ENCODE measurements at regions of chr18 and their contacts with region 1.

Region 1: DNA sequence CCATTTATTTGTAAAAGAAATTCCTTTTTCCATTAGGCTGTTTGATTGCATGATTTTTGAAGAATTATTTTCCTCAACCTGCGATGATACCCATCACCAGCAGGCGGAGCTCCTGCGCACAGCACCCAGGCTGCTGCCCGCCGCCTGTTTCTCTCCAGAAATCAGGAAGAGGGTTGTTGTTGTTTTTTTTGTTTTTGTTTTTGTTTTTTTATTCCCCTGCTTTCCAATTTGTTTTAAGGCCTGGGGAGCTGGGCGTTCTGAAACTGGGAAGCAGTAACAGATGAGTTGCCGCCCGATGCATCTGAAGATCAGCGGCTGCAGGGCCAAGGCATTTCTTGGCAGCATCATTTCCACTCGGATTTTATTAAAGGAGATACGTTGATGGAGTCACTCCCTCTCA is 132.1 kb downstream of the MBP start:
- DNase-seq: no peak
- ATAC-seq: peak; percentile 69
- H3K4me3 ChIP-seq: no peak overlapping the region
- H3K27ac ChIP-seq: no peak overlapping the region
- H3K4me1 ChIP-seq: no peaks in the 10 kb centered on the region
- H3K27me3 ChIP-seq: no peaks in the 10 kb centered on the region
- CTCF ChIP-seq: peak; percentile 91 to 98 (median 97)
- EP300 ChIP-seq: no peak
- POLR2A ChIP-seq: no peak
- RAD21 ChIP-seq: peak; percentile 92

Region 2: DNA sequence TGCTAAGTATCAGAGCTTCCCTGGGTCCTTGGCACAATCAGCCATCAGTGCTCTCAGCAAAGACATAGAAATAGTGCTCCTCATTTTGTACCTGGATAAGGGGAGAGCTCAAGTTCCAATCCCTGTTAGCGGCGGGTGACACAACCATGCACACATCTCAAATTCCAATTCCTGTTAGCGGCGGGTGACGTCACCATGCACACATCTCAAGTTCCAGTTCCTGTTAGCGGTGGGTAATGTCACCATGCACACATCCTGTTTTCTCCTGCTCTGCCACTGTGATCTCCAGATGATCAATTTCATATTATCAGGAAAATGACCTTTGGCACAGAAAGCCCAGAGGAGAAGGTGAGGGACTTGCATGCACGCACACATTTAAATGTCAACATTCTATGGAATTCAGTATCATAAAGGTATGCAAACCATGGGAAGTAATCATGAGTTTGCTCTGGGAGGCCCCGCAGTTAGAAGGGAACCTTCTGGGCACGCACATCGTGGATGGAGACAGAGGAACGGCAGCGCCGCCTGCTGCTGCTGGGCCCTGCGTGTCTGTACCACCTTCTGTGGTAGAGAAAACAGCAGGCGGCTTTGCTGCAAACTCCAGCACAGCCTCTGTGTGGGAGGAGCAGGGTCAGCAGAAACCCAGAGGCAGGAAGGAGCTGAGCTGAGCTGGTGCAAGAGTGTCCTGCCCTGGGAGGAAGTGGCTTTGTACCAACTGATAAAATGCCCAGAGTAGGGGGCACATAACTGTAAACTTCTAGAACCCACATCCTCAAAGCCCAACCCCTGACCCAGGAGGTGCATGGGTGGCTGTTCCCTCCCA is 54.3 kb after region 1 on chr18:
- CTCF ChIA-PET with region 1: interaction called, 57 read pairs
- POLR2A ChIA-PET with region 1: interaction called, 3 read pairs
- RAD21 ChIA-PET with region 1: interaction called, 15 read pairs
- SMC1A ChIA-PET with region 1: interaction called, 21 read pairs
- in situ Hi-C with region 1: no loop called
- intact Hi-C with region 1: loop called (anchors 2 kb)
- DNase-seq: peak; percentile 80
- ATAC-seq: peak; percentile 93
- H3K4me3 ChIP-seq: peak overlapping the region; percentile 53
- H3K27ac ChIP-seq: peak overlapping the region; percentile 88
- H3K4me1 ChIP-seq: peaks cover 46% of the 10 kb centered on the region
- H3K27me3 ChIP-seq: no peaks in the 10 kb centered on the region
- CTCF ChIP-seq: peak; percentile 73 to 78 (median 75)
- EP300 ChIP-seq: peak; percentile 70 to 74
- POLR2A ChIP-seq: no peak; the same call in 1 of the 2 replicates
- RAD21 ChIP-seq: peak; percentile 58

Region 3: GRCh38 chr18:77067291-77068061 is 66.9 kb after region 1 on chr18:
- CTCF ChIA-PET with region 1: interaction called, 12 read pairs
- POLR2A ChIA-PET with region 1: no interaction called
- RAD21 ChIA-PET with region 1: interaction called, 7 read pairs
- SMC1A ChIA-PET with region 1: interaction called, 11 read pairs
- in situ Hi-C with region 1: no loop called
- intact Hi-C with region 1: no loop called
- DNase-seq: peak; percentile 59
- ATAC-seq: peak; percentile 68
- H3K4me3 ChIP-seq: peak overlapping the region; percentile 23; the same call in 1 of the 2 replicates
- H3K27ac ChIP-seq: peak overlapping the region; percentile 97
- H3K4me1 ChIP-seq: peaks cover 71% of the 10 kb centered on the region
- H3K27me3 ChIP-seq: no peaks in the 10 kb centered on the region
- CTCF ChIP-seq: peak; percentile 15 to 18 (median 16); a peak in 2 of 6 replicates
- EP300 ChIP-seq: no peak
- POLR2A ChIP-seq: no peak
- RAD21 ChIP-seq: no peak

Region 4: DNA sequence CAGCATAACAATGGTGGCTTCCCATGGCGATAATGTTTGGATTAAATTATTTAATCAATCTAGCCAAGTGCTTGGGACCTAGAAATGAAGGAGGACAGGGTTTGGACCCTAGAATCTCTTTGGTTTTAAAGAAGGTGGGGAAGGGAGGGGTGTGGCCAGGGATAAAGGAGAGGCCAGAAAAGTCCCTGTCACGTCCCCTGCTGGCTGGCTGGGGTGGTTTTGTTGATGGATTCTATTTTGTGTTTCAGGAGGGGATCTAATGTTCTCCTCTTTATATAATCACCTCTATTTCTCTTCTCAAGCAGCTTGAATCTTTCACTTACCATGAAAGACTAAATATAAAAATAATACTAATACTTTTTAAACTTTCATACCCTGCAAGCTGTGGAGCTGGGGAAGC is 196.5 kb after region 1 on chr18:
- CTCF ChIA-PET with region 1: interaction called, 10 read pairs
- POLR2A ChIA-PET with region 1: no interaction called
- RAD21 ChIA-PET with region 1: interaction called, 3 read pairs
- SMC1A ChIA-PET with region 1: interaction called, 3 read pairs
- in situ Hi-C with region 1: loop called (anchors 5 kb)
- intact Hi-C with region 1: no loop called
- DNase-seq: no peak
- ATAC-seq: 0 out of 3 replicates have a peak, but pooled peaks have one; percentile 33
- H3K4me3 ChIP-seq: no peak overlapping the region
- H3K27ac ChIP-seq: no peak overlapping the region
- H3K4me1 ChIP-seq: no peaks in the 10 kb centered on the region; the same call in 1 of the 2 replicates
- H3K27me3 ChIP-seq: no peaks in the 10 kb centered on the region
- CTCF ChIP-seq: peak; percentile 27 to 35 (median 28); a peak in 4 of 6 replicates
- EP300 ChIP-seq: no peak
- POLR2A ChIP-seq: no peak
- RAD21 ChIP-seq: peak; percentile 33; the same call in 1 of the 2 replicates